Ascending aorta (tissue), 2 donors: ENCODE measurements at regions of chr14 and their contacts with region 1.

Region 1: DNA sequence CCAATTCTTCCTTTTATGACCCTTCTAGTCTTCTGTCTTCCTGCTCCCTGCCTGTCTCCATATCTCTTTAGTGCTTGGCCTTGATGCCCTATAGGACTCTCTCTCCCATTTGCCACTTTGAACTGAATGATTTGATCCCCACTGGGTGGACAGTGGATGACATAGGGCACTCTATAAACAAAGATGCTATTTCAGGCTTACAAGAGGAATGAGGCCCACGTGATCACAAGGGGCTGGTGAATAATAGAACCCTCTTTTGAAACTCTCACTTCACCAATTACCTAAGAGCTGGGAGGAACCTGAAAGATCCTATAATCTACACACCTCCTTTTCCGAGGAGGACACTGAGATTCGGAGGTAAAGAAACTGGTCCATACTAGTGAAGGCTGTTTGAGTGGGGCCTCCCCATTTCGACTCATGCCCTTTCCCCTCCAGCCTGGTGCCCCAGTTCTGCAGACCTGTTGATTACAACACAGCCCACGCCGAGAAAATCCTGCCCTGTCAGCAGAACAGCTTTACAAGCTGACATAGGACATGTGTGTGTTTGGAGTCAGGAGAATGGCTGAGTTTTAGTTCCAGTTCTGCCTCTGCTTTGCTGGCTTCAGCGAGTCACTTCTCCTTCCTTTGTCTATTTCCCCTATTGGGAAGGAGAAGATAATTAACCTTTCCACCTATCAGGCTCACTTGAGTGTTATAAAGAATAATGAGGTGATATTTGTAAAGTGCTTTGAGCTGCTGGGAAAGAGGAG is 400.3 kb downstream of the ZFP36L1 start:
- DNase-seq: peak; percentile 41 to 82
- H3K4me3 ChIP-seq: no peak overlapping the region
- H3K27ac ChIP-seq: peak overlapping the region; percentile 85 to 91
- H3K4me1 ChIP-seq: peaks cover 18 to 61% of the 10 kb centered on the region in 2 donors
- H3K27me3 ChIP-seq: no peaks in the 10 kb centered on the region
- CTCF ChIP-seq: no peak

Region 2: GRCh38 chr14:68377459-68377858 is 15.1 kb before region 1 on chr14:
- intact Hi-C with region 1: loop called (anchors 1 kb)
- DNase-seq: peak; percentile 33 to 82
- H3K4me3 ChIP-seq: no peak overlapping the region
- H3K27ac ChIP-seq: peak overlapping the region; percentile 51 to 62
- H3K4me1 ChIP-seq: peaks cover 0 to 30% of the 10 kb centered on the region in 2 donors
- H3K27me3 ChIP-seq: no peaks in the 10 kb centered on the region
- CTCF ChIP-seq: no peak

Region 3: GRCh38 chr14:68460541-68460940 is 68.0 kb after region 1 on chr14:
- intact Hi-C with region 1: loop called (anchors 2 kb)
- DNase-seq: peak; percentile 26 to 86
- H3K4me3 ChIP-seq: no peak overlapping the region
- H3K27ac ChIP-seq: peak overlapping the region; percentile 89 to 91
- H3K4me1 ChIP-seq: peaks cover 14 to 29% of the 10 kb centered on the region in 2 donors
- H3K27me3 ChIP-seq: no peaks in the 10 kb centered on the region
- CTCF ChIP-seq: no peak

Region 4: DNA sequence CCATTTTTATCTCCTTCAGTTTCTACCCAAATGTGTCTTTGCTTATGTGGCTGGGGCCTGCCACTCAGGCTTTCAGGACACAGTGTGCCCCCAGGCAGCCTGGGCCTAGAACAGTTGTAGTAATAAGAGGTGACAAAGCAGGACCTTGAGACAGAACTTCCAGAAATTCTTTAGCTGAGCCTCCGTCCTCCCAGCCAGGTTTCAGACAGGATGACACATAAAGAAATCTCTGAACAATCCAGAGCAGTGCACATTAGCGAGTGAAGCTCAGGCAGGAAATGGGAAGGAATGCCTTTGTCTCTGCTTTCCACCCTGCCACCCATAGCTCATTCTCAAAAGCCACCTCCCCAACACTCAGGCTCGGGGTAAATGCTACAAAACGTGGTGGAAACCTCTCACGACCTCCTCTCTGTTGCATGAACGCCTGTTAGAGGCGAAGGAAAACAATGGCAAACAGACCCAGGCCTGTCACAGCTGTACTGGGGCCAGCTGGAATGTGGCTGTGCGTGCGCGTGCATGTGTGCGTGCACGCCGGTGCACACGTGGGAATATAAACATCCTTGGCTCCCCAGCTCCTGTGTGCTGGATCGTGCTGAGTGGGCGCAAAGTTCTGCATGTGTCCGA is 113.6 kb after region 1 on chr14:
- intact Hi-C with region 1: loop called (anchors 5 kb)
- DNase-seq: no peak
- H3K4me3 ChIP-seq: no peak overlapping the region
- H3K27ac ChIP-seq: peak overlapping the region; percentile 38 to 44
- H3K4me1 ChIP-seq: peaks cover 13 to 28% of the 10 kb centered on the region in 2 donors
- H3K27me3 ChIP-seq: no peaks in the 10 kb centered on the region
- CTCF ChIP-seq: no peak